Posterior cingulate gyrus (tissue), 11 donors: ENCODE measurements at regions of chr3 and their contacts with region 1.

Region 1: DNA sequence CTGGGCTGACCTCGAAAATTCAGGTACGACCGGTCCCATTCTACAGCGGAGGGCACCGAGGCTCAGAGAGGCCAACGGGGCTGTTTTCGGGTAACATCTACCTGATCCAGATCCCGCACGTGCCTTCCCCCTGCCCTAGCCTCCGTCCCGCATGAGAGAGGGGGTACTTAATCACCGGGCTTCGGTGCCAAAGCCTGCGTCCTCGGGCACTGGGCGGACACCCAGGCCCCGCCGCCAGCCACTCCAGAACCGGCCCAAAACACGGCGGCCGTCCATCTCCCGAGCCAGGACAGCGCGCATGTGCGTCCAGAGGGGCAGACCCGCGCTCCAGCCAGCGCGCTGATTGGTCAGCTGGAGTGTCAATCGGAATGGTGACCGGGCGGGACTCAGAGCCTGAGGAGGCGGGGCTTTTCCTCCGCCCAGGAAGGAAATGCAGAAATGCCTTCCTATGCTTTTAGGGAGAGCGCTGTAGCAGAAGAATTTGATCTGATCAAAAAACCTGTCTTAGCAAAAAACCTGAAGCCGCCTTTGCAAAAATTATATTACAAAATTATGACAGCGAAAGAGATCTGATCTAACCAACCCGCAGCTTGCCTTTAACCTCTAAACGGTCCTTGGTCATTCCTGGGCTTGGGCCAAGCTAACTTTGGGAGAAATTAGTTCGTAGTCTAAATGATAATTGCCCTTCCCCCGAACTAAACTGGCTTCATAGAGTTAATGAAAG is at the start of gene RPUSD3:
- DNase-seq: peak; percentile 98 to 100 (median 100)

Region 2: GRCh38 chr3:9792405-9793160 is 51.3 kb before region 1 on chr3 and contains the starts of genes ARPC4 and TADA3:
- intact Hi-C with region 1: loop called (anchors 2 kb)
- DNase-seq: peak; percentile 81 to 98 (median 88)

Region 3: GRCh38 chr3:9890249-9891071 is 46.6 kb after region 1 on chr3 and contains the start of gene JAGN1:
- intact Hi-C with region 1: loop called (anchors 5 kb)
- DNase-seq: peak; percentile 83 to 98 (median 87)

Region 4: DNA sequence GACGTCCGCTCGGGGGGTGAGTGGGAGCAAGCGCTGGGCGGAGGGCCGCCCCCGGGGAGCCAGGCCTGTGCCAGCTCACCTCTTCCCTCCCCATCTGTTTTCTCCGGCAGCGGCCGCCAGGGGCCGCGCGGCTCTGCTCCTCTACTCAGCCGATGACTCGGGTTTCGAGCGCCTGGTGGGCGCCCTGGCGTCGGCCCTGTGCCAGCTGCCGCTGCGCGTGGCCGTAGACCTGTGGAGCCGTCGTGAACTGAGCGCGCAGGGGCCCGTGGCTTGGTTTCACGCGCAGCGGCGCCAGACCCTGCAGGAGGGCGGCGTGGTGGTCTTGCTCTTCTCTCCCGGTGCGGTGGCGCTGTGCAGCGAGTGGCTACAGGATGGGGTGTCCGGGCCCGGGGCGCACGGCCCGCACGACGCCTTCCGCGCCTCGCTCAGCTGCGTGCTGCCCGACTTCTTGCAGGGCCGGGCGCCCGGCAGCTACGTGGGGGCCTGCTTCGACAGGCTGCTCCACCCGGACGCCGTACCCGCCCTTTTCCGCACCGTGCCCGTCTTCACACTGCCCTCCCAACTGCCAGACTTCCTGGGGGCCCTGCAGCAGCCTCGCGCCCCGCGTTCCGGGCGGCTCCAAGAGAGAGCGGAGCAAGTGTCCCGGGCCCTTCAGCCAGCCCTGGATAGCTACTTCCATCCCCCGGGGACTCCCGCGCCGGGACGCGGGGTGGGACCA is 89.1 kb after region 1 on chr3:
- intact Hi-C with region 1: loop called (anchors 5 kb)
- DNase-seq: peak in 9 of 10 donors; percentile 58 to 95 (median 73)